Calu3 (cell line): ENCODE measurements at regions of chr12 and their contacts with region 1.

Region 1: GRCh38 chr12:12654691-12655460 is 41.1 kb downstream of the GPR19 start:
- DNase-seq: no peak
- H3K4me3 Mint-ChIP-seq: no peak overlapping the region
- H3K27ac Mint-ChIP-seq: no peak overlapping the region
- H3K4me1 Mint-ChIP-seq: no peaks in the 10 kb centered on the region
- H3K27me3 Mint-ChIP-seq: no peaks in the 10 kb centered on the region
- CTCF ChIP-seq: no peak

Region 2: DNA sequence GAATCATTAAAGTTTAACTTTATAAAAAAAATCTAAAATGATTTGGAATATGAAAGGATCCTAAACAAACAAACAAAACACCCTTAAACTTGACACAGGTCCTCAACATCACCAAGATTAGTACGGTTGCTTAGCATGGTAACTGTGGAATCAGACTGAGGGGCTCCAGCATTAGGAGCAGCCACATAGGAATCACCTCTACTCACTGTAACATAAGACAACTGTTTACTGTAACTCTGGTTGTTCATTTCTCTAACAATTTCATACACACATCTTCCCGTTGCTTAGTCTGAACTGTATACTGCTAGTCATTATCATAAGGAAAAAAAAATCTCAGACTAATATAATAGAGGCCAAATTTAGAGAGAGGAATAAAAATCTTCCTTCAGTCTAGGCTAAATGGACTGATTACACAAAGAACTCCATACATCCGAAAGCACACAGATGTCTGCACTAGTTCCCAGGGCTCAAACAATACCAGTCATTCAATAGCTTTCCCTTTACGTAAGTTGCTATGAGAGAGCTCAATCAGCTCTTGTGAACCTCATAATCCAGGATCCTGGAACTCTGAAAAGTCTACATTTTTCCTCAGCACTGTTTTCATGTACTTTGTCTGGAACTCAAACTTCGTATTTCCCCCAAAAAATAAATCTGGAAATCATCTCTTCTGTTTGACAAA is 414.1 kb before region 1 on chr12:
- CTCF ChIA-PET with region 1: no interaction called
- intact Hi-C with region 1: no loop called
- DNase-seq: no peak
- H3K4me3 Mint-ChIP-seq: peak overlapping the region; percentile 18
- H3K27ac Mint-ChIP-seq: peak overlapping the region; percentile 61
- H3K4me1 Mint-ChIP-seq: peaks cover 44% of the 10 kb centered on the region
- H3K27me3 Mint-ChIP-seq: no peaks in the 10 kb centered on the region
- CTCF ChIP-seq: no peak

Region 3: GRCh38 chr12:12613344-12613743 is 41.5 kb before region 1 on chr12:
- CTCF ChIA-PET with region 1: no interaction called
- intact Hi-C with region 1: no loop called
- DNase-seq: no peak
- H3K4me3 Mint-ChIP-seq: peak overlapping the region; percentile 94
- H3K27ac Mint-ChIP-seq: no peak overlapping the region
- H3K4me1 Mint-ChIP-seq: peaks cover 35% of the 10 kb centered on the region
- H3K27me3 Mint-ChIP-seq: no peaks in the 10 kb centered on the region
- CTCF ChIP-seq: no peak

Region 4: DNA sequence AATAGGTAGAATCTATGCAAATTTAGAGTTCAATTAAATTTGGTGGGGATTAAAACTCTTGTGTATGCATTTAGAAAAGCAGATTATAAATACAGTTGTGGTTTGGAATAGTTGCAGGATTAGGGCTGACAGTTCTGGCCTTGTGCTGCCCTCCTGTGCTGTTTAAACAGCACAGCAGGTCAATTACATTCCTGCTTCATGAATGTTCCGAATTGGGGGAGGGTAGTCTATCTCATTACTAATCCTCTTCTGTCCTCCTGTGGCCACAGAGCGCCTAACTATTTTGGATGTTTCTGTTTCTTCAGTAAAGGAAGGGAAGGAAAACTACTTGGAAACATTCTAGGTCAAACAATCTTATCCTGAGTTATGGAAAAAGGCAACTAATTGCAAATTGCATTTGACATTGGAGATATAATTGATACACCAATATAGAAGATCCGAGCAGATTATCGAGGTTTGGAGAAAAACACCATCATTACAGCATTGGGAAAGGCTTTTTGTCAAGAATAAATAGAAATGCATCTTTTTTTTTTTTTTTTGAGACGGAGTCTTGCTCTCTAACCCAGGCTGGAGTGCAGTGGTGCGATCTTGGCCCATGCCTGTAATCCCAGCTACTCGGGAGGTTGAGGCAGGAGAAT is 49.8 kb after region 1 on chr12:
- CTCF ChIA-PET with region 1: no interaction called
- intact Hi-C with region 1: loop called (anchors 5 kb)
- DNase-seq: peak; percentile 60
- H3K4me3 Mint-ChIP-seq: no peak overlapping the region
- H3K27ac Mint-ChIP-seq: no peak overlapping the region
- H3K4me1 Mint-ChIP-seq: peaks cover 17% of the 10 kb centered on the region
- H3K27me3 Mint-ChIP-seq: no peaks in the 10 kb centered on the region
- CTCF ChIP-seq: peak; percentile 71

Region 5: DNA sequence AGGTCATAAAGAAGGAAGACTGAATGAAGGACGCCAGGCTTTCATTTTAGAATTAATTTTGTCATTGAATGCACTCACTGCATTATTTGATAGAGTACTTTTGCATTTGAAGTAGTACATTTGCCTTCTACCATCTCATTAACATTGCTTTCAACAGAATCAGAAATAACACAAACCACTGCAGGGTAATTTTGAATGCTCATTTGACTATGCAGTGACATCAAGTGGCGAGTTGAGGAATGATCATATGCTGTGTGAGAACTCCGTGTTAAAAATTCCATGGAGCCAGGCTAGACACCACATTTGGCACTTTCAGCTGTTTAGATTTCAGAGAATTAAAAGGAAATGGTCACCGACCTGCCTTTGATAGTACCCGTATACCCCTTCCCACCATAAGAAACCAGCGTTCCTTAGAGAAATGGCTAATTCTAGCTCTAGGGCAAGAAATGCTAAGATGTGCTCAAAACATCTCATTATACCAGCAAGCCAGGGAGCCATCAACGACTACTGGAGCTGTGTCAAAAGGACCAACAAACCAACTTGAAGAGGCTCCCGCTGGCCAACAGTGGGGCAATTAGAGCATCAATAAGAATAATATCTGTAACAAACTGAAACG is 328.7 kb after region 1 on chr12:
- CTCF ChIA-PET with region 1: no interaction called
- intact Hi-C with region 1: no loop called
- DNase-seq: peak; percentile 32
- H3K4me3 Mint-ChIP-seq: no peak overlapping the region
- H3K27ac Mint-ChIP-seq: no peak overlapping the region
- H3K4me1 Mint-ChIP-seq: no peaks in the 10 kb centered on the region
- H3K27me3 Mint-ChIP-seq: no peaks in the 10 kb centered on the region
- CTCF ChIP-seq: peak; percentile 25